Calu3 (cell line): ENCODE measurements at regions of chr5 and their contacts with region 1.

Region 1: GRCh38 chr5:129973716-129974426 is 69.6 kb downstream of the CHSY3 start:
- DNase-seq: no peak
- H3K4me3 Mint-ChIP-seq: no peak overlapping the region
- H3K27ac Mint-ChIP-seq: no peak overlapping the region
- H3K4me1 Mint-ChIP-seq: no peaks in the 10 kb centered on the region
- H3K27me3 Mint-ChIP-seq: no peaks in the 10 kb centered on the region
- CTCF ChIP-seq: no peak

Region 2: DNA sequence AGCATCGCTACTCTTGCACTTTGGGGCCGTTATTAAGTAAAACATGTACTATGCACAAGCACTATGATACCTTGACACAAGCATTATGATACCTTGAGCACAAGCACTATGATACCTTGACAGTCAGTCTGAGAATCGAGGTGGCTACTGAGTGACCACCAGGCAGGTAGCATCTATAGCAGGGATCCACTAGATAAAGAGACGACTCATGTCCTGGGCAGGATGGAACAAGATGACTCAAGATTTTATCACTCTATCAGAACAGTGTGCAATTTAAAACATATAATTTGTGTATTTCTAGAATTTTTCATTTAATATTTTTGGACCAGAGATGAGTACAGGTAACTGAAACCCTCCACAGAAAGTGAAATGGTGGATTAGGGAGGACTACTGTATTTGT is 52.7 kb before region 1 on chr5:
- CTCF ChIA-PET with region 1: no interaction called
- intact Hi-C with region 1: loop called (anchors 1 kb)
- DNase-seq: no peak
- H3K4me3 Mint-ChIP-seq: no peak overlapping the region
- H3K27ac Mint-ChIP-seq: no peak overlapping the region
- H3K4me1 Mint-ChIP-seq: no peaks in the 10 kb centered on the region
- H3K27me3 Mint-ChIP-seq: no peaks in the 10 kb centered on the region
- CTCF ChIP-seq: no peak

Region 3: DNA sequence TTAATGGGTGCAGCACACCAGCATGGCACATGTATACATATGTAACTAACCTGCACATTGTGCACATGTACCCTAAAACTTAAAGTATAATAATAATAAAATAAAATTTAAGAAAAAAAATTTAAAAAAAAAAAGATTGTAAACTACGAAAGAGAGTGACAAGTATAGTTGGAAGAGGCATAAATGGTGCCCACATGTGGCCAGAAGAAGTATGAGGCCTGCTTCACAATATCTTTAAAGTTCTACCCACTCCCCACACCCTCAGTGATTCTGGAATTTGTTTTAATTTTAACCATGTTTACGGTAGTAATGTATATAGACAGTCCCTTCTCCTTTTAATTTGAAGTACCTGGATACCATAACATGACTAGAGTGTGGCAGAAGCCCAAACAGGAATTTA is 103.1 kb after region 1 on chr5:
- CTCF ChIA-PET with region 1: no interaction called
- intact Hi-C with region 1: no loop called
- DNase-seq: no peak
- H3K4me3 Mint-ChIP-seq: no peak overlapping the region
- H3K27ac Mint-ChIP-seq: no peak overlapping the region
- H3K4me1 Mint-ChIP-seq: no peaks in the 10 kb centered on the region
- H3K27me3 Mint-ChIP-seq: no peaks in the 10 kb centered on the region
- CTCF ChIP-seq: no peak